ENCODE measurements at regions of chr11 and their contacts with region 1.

Region 1: GRCh38 chr11:14249121-14249963 is 109.6 kb downstream of the RRAS2 start:
- DNase-seq: peak; percentile 90
- H3K4me3 Mint-ChIP-seq: peak overlapping the region; percentile 32
- H3K27ac Mint-ChIP-seq: no peak overlapping the region
- H3K4me1 Mint-ChIP-seq: peaks cover 8% of the 10 kb centered on the region
- H3K27me3 Mint-ChIP-seq: peaks cover 17% of the 10 kb centered on the region

Region 2: DNA sequence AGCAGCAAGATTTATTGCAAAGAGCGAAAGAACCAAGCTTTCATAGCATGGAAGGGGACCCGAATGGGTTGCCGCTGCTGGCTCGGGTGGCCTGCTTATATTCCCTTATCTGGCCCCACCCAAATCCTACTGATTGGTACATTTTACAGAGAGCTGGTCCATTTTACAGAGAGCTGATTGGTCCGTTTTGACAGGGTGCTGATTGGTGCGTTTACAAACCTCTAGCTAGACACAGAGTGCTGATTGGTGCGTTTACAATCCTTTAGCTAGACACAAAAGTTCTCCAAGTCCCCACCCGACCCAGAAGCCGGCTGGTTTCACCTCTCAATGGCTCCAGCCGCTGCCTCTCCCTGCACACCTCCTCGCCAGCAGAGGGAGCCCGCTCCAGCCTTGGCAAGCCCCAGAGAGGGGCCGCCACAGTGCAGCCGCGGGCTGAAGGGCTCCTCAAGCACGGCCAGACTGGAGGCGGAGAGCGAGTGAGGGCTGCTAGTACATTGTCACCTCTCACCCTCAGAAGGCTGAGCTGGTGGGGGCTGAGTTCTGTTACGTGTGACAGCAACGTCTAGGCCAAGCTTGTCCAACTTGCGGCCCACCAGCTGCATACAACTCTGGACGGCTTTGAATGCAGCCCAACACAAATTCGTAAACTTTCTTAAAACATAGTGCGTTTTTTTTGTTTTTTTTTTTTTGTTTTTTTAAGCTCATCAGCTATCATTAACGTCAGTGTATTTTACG is 762.2 kb before region 1 on chr11:
- intact Hi-C with region 1: loop called (anchors 5 kb)
- DNase-seq: peak; percentile 85
- H3K4me3 Mint-ChIP-seq: peak overlapping the region; percentile 63
- H3K27ac Mint-ChIP-seq: no peak overlapping the region
- H3K4me1 Mint-ChIP-seq: no peaks in the 10 kb centered on the region
- H3K27me3 Mint-ChIP-seq: peaks cover 13% of the 10 kb centered on the region

Region 3: DNA sequence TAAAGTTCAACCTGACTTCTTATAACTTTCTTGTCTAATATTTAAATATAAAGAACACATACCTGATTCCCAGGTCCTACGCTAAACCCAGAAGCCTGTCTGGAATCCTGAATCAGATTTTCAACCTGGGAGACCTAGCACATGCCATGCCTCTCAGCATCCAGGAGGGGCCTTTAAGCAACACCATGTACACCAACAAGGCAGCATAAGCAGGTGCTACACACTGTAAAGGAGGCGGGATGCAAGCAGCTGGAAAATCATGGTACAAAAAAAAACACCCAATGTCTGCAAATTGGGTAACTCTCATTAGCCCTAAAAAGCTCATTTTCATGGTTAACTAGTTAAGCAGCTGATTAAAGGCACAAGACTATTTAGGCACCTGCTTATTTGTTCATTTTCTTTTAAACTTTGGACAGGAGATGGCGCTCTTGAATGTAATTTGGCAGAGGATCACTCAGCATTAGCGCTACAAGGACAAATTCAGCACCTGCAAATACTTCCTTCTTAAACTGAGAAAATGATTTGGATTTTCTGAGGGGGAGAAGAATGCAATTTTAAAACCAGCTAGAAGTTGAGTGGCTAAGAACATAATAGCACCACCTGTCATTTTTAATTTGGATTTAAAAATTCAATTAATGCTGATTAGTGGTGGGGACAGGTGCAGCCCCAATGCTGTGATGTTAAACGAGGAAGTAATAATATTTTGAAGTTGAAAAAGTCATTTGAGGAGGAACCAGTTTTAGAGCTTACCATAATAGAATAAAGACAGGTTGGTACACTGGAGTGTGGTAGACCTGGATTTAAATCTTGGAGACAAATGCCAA is 476.9 kb before region 1 on chr11:
- intact Hi-C with region 1: loop called (anchors 1 kb)
- DNase-seq: peak; percentile 85
- H3K4me3 Mint-ChIP-seq: no peak overlapping the region
- H3K27ac Mint-ChIP-seq: no peak overlapping the region
- H3K4me1 Mint-ChIP-seq: peaks cover 6% of the 10 kb centered on the region
- H3K27me3 Mint-ChIP-seq: peaks cover 26% of the 10 kb centered on the region

Region 4: DNA sequence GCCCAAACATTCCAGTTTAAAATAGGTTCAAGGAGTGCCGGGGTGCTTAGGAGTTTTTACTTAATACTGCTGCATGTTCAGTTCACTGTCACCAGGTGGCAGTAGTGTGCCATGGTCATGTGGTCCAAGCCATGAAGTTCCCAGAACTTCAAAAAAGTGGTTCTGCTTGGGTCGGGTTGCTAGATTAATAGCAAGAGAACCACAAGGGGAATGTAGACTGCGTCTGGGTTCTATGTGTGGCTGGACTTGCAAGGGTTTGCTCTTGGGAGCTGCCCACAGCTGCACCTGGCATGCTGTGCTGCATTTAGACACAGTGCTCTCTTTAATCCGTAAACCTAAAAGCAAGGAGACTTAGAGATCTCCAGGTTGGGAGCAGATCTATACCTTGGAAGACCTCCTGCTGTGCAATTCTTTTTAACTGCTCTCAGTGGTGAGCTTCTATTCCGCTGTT is 293.3 kb before region 1 on chr11:
- intact Hi-C with region 1: loop called (anchors 1 kb)
- DNase-seq: peak; percentile 84
- H3K4me3 Mint-ChIP-seq: no peak overlapping the region
- H3K27ac Mint-ChIP-seq: no peak overlapping the region
- H3K4me1 Mint-ChIP-seq: no peaks in the 10 kb centered on the region
- H3K27me3 Mint-ChIP-seq: peaks cover 38% of the 10 kb centered on the region

Region 5: GRCh38 chr11:14148653-14149273 is 100.6 kb before region 1 on chr11:
- intact Hi-C with region 1: loop called (anchors 1 kb)
- DNase-seq: peak; percentile 63
- H3K4me3 Mint-ChIP-seq: no peak overlapping the region
- H3K27ac Mint-ChIP-seq: no peak overlapping the region
- H3K4me1 Mint-ChIP-seq: no peaks in the 10 kb centered on the region
- H3K27me3 Mint-ChIP-seq: peaks cover 13% of the 10 kb centered on the region

Measured in activated CD4-positive, alpha-beta T cell treated with anti-CD3 and anti-CD28 coated beads, Interleukin-2, amount 10 ng/mL, durations not matched to agents 24 days and 14 days (primary cell).